ENCODE measurements at regions of chr10 and their contacts with region 1.

Region 1: DNA sequence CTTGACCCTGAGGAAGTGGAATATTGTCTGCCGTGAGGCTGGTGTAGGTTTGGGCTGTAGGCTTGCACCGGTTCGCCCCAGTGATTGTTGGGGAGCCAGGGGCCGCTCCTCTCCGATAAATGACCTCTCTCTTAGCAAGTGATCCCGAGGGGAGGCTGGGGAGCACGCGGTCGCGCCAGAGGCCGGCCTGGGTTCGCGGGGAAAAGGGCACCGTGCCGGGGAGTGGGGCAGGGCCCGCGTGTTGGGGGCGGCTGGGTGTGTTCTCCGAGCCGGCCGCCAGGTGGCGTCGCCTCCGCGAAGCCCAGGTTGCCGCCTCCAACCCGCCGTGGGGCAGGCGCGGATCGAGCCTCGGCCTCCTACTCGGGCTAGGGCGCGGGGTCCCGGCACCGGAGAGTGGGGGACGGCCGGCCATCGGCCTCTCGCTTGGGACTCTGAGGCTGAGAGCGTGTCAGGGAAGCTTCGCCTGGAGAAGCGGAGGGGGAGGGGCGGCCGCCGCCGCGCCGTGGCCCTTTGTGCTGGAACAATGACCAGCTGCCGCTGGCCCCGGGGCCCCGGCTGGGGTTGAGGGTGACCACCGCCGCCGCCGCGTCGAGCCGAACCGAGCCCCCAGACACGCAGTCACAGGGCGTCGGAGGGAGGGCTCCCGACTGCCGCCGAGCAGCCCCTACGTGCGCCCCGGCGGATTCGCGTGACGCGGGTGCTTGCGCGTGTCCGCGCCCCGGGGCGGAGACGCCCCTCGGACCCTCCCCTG is 442 bp upstream of the LZTS2 start:
- DNase-seq: no peak
- ATAC-seq: peak; percentile 54
- H3K4me3 ChIP-seq: peak overlapping the region; percentile 74 to 87
- H3K27ac ChIP-seq: peak overlapping the region; percentile 96
- H3K4me1 ChIP-seq: peaks cover 37% of the 10 kb centered on the region
- H3K27me3 ChIP-seq: no peaks in the 10 kb centered on the region
- CTCF ChIP-seq: peak; percentile 99

Region 2: GRCh38 chr10:100969187-100970075 is 29.7 kb before region 1 on chr10 and contains the start of gene SEMA4G:
- CTCF ChIA-PET with region 1: interaction called, 11 read pairs
- POLR2A ChIA-PET with region 1: no interaction called
- in situ Hi-C with region 1: no loop called
- intact Hi-C with region 1: no loop called
- DNase-seq: peak; percentile 13
- ATAC-seq: peak; percentile 87
- H3K4me3 ChIP-seq: peak within 1 kb of the TSS; percentile 51 to 56
- H3K27ac ChIP-seq: peak within 1 kb of the TSS; percentile 30; the same call in 1 of the 2 replicates
- H3K4me1 ChIP-seq: peaks cover 10% of the 10 kb centered on the region
- H3K27me3 ChIP-seq: no peaks in the 10 kb centered on the region
- CTCF ChIP-seq: peak; percentile 89
- total RNA-seq, gene SEMA4G: 4.7 TPM

Region 3: GRCh38 chr10:100986623-100986951 is 12.6 kb before region 1 on chr10:
- CTCF ChIA-PET with region 1: no interaction called
- POLR2A ChIA-PET with region 1: no interaction called
- in situ Hi-C with region 1: no loop called
- intact Hi-C with region 1: no loop called
- DNase-seq: no peak
- ATAC-seq: no peak; the same call in 1 of the 2 replicates
- H3K4me3 ChIP-seq: peak overlapping the region; percentile 84 to 98
- H3K27ac ChIP-seq: peak overlapping the region; percentile 95
- H3K4me1 ChIP-seq: peaks cover 30% of the 10 kb centered on the region
- H3K27me3 ChIP-seq: no peaks in the 10 kb centered on the region
- CTCF ChIP-seq: no peak

Region 4: DNA sequence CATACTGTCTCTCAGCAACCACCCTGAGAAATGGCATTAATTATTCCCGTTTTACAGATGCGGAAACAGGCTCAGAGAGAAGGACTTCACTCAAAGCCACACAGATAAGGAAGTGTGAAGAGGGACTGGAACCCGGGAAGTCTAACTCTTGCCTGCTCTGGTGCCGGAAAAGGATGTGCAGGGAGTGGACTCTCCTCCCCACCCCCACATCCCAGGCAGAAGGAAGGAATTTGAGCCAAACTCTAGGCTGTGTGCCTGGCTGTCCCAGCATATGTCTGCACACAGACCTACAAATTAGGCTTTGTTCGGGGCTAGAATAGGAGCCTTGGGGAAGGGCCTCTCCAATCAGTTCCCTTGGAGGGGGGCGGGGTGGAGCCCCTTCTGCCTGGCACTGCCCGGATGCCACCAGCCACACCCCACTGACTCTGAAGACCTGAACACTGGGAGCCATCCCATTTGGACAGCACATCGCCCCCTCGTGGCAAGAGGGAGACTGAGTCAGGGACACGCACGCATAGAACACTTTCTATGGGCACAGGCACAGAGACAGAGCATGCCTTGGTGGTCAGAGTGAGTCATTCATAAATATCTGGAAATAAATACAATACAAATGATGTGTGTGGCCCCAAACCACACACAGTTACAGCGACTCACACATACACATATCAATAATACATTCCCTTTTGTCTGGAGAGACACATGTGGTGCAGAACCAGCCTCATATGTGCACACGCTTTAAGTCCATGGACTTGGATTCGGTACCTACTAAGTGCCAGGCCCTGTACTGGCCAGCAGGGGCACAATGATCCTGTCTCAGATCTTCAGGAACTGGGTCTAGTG is 13.6 kb after region 1 on chr10:
- CTCF ChIA-PET with region 1: interaction called, 11 read pairs
- POLR2A ChIA-PET with region 1: interaction called, 14 read pairs
- in situ Hi-C with region 1: no loop called
- intact Hi-C with region 1: loop called (anchors 1 kb)
- DNase-seq: no peak
- ATAC-seq: peak; percentile 87
- H3K4me3 ChIP-seq: no peak overlapping the region
- H3K27ac ChIP-seq: no peak overlapping the region
- H3K4me1 ChIP-seq: peaks cover 18% of the 10 kb centered on the region
- H3K27me3 ChIP-seq: no peaks in the 10 kb centered on the region
- CTCF ChIP-seq: peak; percentile 97

Region 5: DNA sequence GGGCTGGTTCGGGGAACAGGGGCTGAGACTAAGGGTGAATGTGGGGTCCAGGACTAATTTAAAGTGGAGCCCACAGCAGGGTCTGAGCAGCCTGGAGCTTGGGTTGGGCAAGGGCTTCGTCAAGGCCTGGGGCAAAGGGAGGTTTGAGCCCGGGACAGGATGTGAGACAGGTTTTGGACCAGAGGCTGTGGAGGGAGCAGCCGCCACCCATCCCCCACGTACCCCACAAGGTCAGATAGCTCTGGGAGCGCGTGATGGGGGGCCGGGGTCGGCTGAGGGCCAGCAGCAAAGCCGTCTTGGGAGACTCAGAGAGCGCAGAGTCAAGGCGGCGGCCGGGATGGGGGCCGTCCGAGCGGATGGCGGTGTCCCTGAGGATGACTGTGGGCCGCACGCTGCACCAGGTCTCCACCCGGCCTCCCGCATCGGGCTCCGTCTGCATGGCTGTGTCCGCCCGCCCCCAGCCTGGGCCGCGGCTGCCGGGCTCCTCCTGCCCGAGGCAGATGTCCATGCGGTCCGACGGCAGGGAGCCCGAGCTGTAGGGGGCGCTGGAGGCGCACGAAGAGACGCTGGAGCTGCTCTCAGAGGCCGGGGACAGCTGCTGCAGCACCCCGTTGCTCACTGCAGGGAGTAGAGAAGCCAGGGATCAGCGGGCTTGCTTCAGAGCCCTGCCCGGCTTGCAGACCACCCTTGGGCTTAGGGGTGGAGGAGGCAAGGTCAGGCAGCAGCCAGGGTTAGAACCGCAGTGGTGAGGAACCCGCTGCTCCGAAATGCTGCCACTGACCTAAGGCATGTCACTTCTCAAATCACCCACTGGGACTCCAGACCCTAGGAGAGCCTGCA is 19.7 kb after region 1 on chr10:
- CTCF ChIA-PET with region 1: interaction called, 11 read pairs
- POLR2A ChIA-PET with region 1: interaction called, 14 read pairs
- in situ Hi-C with region 1: no loop called
- intact Hi-C with region 1: loop called (anchors 1 kb)
- DNase-seq: no peak
- ATAC-seq: peak; percentile 88
- H3K4me3 ChIP-seq: no peak overlapping the region
- H3K27ac ChIP-seq: no peak overlapping the region
- H3K4me1 ChIP-seq: peaks cover 2% of the 10 kb centered on the region; the same call in 1 of the 2 replicates
- H3K27me3 ChIP-seq: no peaks in the 10 kb centered on the region
- CTCF ChIP-seq: peak; percentile 97

Region 6: DNA sequence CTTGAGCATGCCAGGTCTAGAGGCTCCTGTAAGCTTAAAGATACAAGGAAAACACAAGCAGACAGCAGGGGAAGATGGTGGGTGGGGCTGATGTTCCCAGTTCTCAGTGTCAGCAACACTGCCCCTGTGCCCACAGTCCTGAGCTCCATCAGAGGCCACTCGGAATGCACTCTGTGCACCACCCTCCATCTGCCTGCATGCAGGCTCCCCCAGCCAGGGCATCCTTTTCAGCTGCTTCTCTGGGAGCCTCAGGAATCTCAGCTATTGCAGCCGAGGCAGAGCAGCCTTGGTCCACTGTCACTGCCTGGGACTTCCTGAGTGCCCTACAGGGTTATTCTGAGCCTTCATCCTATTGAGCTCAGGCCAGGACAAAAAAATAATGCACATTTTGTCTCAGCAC is 207.9 kb after region 1 on chr10:
- CTCF ChIA-PET with region 1: no interaction called
- POLR2A ChIA-PET with region 1: no interaction called
- in situ Hi-C with region 1: no loop called
- intact Hi-C with region 1: no loop called
- DNase-seq: no peak
- ATAC-seq: peak; percentile 31
- H3K4me3 ChIP-seq: no peak overlapping the region
- H3K27ac ChIP-seq: no peak overlapping the region
- H3K4me1 ChIP-seq: no peaks in the 10 kb centered on the region
- H3K27me3 ChIP-seq: peaks cover 18% of the 10 kb centered on the region
- CTCF ChIP-seq: no peak

Region 7: GRCh38 chr10:101297901-101298486 is 298.8 kb after region 1 on chr10:
- CTCF ChIA-PET with region 1: no interaction called
- POLR2A ChIA-PET with region 1: no interaction called
- in situ Hi-C with region 1: no loop called
- intact Hi-C with region 1: no loop called
- DNase-seq: peak; percentile 45
- ATAC-seq: peak; percentile 88
- H3K4me3 ChIP-seq: no peak overlapping the region
- H3K27ac ChIP-seq: no peak overlapping the region
- H3K4me1 ChIP-seq: no peaks in the 10 kb centered on the region; the same call in 1 of the 2 replicates
- H3K27me3 ChIP-seq: peaks cover 2% of the 10 kb centered on the region
- CTCF ChIP-seq: peak; percentile 99